ENCODE measurements at regions of chr5 and their contacts with region 1.

Region 1: GRCh38 chr5:13987843-13988464 is 43.5 kb upstream of the DNAH5 start:
- DNase-seq: peak; percentile 13 to 22
- ATAC-seq: peak; percentile 50 to 76
- H3K4me3 ChIP-seq: no peak overlapping the region
- H3K27ac ChIP-seq: no peak overlapping the region
- H3K4me1 ChIP-seq: no peaks in the 10 kb centered on the region
- H3K27me3 ChIP-seq: no peaks in the 10 kb centered on the region
- CTCF ChIP-seq: peak; percentile 72 to 83 (median 78)
- POLR2A ChIP-seq: no peak

Region 2: DNA sequence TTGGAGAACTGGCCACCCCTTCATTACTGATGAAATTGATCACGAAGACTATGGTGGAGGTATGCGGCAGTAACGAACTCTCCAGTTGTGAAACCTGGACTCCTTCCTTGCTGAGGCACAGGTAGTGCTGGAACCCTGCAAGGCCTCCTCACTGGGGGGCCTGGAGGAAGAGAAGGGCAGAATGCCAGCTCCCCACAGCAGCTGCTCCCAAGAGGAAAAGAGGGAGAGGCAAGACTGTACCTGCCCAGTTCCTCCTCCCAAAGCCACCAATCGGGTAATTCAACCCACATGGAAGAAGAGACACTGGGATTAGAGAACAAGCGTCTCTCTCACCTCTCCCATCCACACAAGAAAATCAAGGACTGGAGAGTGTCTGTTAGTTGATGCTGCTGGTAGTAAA is 136.1 kb after region 1 on chr5:
- in situ Hi-C with region 1: no loop called
- intact Hi-C with region 1: no loop called
- DNase-seq: no peak
- ATAC-seq: no peak
- H3K4me3 ChIP-seq: no peak overlapping the region
- H3K27ac ChIP-seq: no peak overlapping the region
- H3K4me1 ChIP-seq: no peaks in the 10 kb centered on the region
- H3K27me3 ChIP-seq: no peaks in the 10 kb centered on the region
- CTCF ChIP-seq: no peak
- POLR2A ChIP-seq: no peak

Region 3: GRCh38 chr5:14264604-14265316 is 276.8 kb after region 1 on chr5:
- in situ Hi-C with region 1: loop called in 2 of 4 experiments (anchors 25 kb)
- intact Hi-C with region 1: no loop called
- DNase-seq: peak; percentile 79 to 85
- ATAC-seq: peak; percentile 71 to 73
- H3K4me3 ChIP-seq: peak overlapping the region; percentile 19 to 52 (median 38)
- H3K27ac ChIP-seq: peak overlapping the region in 2 of 4 donors; percentile 27 to 51
- H3K4me1 ChIP-seq: peaks cover 43 to 44% of the 10 kb centered on the region in 2 donors
- H3K27me3 ChIP-seq: no peaks in the 10 kb centered on the region
- CTCF ChIP-seq: no peak
- POLR2A ChIP-seq: peak; percentile 37 to 46

Region 4: GRCh38 chr5:14286574-14287421 is 298.8 kb after region 1 on chr5:
- in situ Hi-C with region 1: loop called in 1 of 4 experiments (anchors 25 kb)
- intact Hi-C with region 1: no loop called
- DNase-seq: peak; percentile 63 to 66
- ATAC-seq: peak; percentile 95
- H3K4me3 ChIP-seq: peak overlapping the region in 2 of 4 donors; percentile 3 to 27
- H3K27ac ChIP-seq: peak overlapping the region; percentile 36 to 75 (median 68)
- H3K4me1 ChIP-seq: peaks cover 63 to 68% of the 10 kb centered on the region in 2 donors
- H3K27me3 ChIP-seq: no peaks in the 10 kb centered on the region
- CTCF ChIP-seq: no peak
- POLR2A ChIP-seq: no peak

Region 5: GRCh38 chr5:14364576-14365472 is 376.9 kb after region 1 on chr5:
- in situ Hi-C with region 1: loop called (anchors 10 to 25 kb)
- intact Hi-C with region 1: loop called (anchors 2 kb)
- DNase-seq: no peak
- ATAC-seq: no peak
- H3K4me3 ChIP-seq: no peak overlapping the region
- H3K27ac ChIP-seq: no peak overlapping the region
- H3K4me1 ChIP-seq: no peaks in the 10 kb centered on the region
- H3K27me3 ChIP-seq: no peaks in the 10 kb centered on the region
- CTCF ChIP-seq: peak; percentile 15 to 61 (median 49)
- POLR2A ChIP-seq: no peak

Region 6: GRCh38 chr5:14727428-14727865 is 739.5 kb after region 1 on chr5:
- in situ Hi-C with region 1: no loop called
- intact Hi-C with region 1: no loop called
- DNase-seq: peak; percentile 56 to 69
- ATAC-seq: peak; percentile 76 to 80
- H3K4me3 ChIP-seq: no peak overlapping the region
- H3K27ac ChIP-seq: peak overlapping the region; percentile 77 to 88 (median 83)
- H3K4me1 ChIP-seq: peaks cover 39 to 44% of the 10 kb centered on the region in 2 donors
- H3K27me3 ChIP-seq: no peaks in the 10 kb centered on the region
- CTCF ChIP-seq: peak; percentile 87 to 94 (median 92)
- POLR2A ChIP-seq: no peak